ENCODE measurements at regions of chr13 and their contacts with region 1.

Region 1: DNA sequence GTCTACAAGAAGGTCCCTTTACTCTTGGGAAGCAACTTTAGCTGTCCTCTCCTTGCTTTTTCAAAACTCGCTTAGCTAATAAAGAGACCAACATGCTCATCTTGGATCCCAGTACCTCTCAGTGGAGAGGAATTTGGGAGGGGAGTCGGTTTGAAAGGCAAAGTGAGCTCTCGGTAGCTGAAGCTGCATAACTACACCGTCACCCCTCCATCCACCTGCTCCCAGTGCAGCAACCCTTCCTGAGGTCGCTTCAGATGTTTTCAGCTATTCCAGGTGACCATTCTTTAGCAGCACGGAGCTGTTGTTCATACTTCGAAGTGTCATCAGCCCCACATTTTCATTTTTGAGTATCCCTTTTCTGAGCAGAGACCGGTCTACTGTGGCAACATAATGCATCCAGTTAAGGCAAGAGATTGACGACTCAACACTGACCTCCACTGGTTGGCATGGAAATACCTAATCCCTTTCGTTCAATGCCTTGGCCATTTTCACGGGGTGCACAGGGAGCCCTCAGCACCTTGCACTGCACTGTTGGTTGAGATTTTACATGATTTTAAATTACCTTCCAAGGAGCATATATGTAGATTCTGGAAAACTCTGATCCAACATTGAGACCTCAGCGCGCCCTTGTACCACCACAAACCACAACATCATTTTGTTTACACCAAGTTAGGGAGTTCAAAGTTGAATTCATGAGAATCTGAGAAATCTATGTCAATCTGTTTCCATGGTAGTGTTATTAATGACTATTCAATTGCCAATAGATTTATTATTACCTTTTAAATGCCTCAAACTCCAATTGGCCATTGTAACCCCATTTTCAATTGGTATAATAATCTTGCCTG is 42.2 kb downstream of the DLEU7 start:
- DNase-seq: peak; percentile 61 to 68 (median 62)
- H3K4me3 ChIP-seq: no peak overlapping the region
- H3K4me3 Mint-ChIP-seq: peak overlapping the region in 1 of 8 donors; percentile 22
- H3K27ac ChIP-seq: no peak overlapping the region
- H3K27ac Mint-ChIP-seq: peak overlapping the region in 2 of 7 donors; percentile 39 to 53
- H3K4me1 ChIP-seq: peaks cover 6% of the 10 kb centered on the region
- H3K4me1 Mint-ChIP-seq: peaks cover 5 to 9% (median 6%) of the 10 kb centered on the region in 4 donors
- H3K27me3 ChIP-seq: no peaks in the 10 kb centered on the region
- H3K27me3 Mint-ChIP-seq: no peaks in the 10 kb centered on the region

Region 2: DNA sequence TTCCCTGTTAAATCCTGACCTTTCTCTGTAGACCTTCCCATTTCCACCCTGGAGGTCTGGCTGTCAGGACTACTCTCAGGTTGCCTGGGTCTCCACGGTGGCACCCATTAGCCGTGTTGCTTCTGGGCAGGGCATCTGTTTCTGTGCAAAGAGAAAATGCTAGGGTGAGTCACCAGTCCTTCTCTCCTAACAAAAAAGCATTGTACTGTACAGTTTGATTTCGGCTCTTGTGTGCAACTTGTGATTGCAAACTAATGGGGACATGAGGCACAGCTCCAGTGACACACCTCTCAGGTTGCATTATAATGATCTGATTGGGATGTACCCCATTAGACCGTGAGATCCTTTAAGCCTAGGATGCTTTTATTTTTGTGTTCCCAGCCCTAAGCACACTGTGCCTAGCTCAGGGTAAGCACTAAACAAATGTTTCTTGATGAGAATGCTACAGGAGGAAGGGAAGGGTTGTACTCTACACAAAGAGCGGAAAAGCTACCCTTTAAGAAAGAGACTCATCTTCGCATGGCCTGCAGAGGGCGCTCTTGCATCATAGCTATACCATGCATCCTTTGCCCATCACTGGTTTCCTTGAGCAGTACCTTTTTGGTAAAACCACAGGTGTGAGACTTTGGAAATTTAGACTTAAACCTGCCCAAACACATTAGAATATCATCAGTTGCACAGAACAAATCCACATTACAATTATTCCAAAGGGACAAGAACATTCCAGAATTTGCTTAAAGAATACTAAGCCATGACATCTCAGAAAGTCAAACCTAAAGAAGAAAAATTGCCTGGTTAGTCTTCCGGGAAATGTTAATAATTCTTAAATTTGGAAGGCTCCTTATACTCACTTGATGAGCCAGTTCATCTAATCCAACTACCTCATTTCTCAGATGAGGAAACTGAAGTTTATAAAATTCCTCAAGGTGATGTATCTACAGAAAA is 824.7 kb before region 1 on chr13:
- CTCF ChIA-PET with region 1: interaction called, 42 read pairs
- POLR2A ChIA-PET with region 1: no interaction called
- intact Hi-C with region 1: loop called (anchors 1 kb)
- DNase-seq: peak; percentile 68 to 75 (median 71)
- H3K4me3 ChIP-seq: no peak overlapping the region
- H3K4me3 Mint-ChIP-seq: no peak overlapping the region
- H3K27ac ChIP-seq: no peak overlapping the region
- H3K27ac Mint-ChIP-seq: no peak overlapping the region
- H3K4me1 ChIP-seq: no peaks in the 10 kb centered on the region
- H3K4me1 Mint-ChIP-seq: peaks cover 0 to 5% (median 3%) of the 10 kb centered on the region in 4 donors
- H3K27me3 ChIP-seq: no peaks in the 10 kb centered on the region
- H3K27me3 Mint-ChIP-seq: no peaks in the 10 kb centered on the region

Region 3: DNA sequence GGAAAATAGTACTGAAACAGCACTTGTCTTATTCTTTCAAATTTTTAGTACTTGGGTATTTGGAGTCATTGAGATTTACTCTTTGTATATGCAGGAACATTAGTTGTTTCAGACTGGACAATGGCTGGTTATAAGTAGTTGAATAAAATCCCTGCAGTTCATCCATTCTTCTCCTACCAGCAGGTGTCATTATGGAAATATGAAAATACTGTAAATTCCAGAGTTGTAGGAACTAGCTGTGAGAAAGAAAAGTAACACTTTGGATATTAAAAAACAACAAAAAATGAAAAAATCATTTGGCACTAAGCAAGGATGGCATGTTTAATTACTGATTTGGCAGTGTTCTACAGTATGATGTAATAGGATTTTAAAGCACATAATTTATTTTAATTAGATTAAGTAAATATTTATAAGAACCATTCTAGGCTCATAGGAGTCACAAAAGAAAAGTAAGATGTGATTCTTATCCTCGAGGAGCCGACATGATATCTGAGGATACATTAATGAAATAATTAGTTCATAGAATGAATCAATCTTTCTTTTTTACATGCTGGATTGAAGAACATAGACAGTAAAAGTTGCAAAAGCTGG is 630.8 kb before region 1 on chr13:
- CTCF ChIA-PET with region 1: interaction called, 4 read pairs
- POLR2A ChIA-PET with region 1: no interaction called
- intact Hi-C with region 1: loop called (anchors 1 kb)
- DNase-seq: no peak
- H3K4me3 ChIP-seq: no peak overlapping the region
- H3K4me3 Mint-ChIP-seq: no peak overlapping the region
- H3K27ac ChIP-seq: no peak overlapping the region
- H3K27ac Mint-ChIP-seq: no peak overlapping the region
- H3K4me1 ChIP-seq: no peaks in the 10 kb centered on the region
- H3K4me1 Mint-ChIP-seq: peaks cover 0 to 7% (median 0%) of the 10 kb centered on the region in 4 donors
- H3K27me3 ChIP-seq: no peaks in the 10 kb centered on the region
- H3K27me3 Mint-ChIP-seq: no peaks in the 10 kb centered on the region

Region 4: DNA sequence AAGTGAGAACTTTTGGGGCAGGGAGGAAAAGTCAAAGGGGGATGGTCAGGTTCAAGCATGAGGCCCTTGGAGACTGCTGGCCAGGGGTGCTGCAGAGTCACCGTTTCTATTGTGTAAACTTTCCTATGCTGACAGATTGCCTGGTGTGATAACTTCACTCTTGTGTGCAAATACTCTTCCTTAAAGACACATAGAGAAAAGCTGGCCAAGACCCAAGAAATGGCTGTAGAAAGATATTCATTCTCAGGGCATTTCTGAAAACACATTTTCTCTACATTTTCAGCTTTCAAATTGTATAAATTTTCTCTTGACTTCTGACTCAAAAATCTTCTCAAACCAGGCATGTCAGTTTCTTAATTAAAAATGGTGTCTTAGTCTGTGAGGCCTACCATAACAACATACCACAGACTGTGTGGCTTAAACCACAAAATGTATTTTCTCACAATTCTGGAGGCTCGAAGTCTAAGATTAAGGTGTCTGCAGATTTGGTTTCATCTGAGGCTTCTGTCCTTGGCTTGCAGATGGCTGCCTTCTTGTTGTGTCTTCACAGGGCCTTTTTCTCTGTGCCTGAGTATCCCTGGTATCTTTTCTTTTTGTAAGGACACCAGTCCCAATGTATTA is 481.6 kb before region 1 on chr13:
- CTCF ChIA-PET with region 1: no interaction called
- POLR2A ChIA-PET with region 1: no interaction called
- intact Hi-C with region 1: loop called (anchors 5 kb)
- DNase-seq: peak in 4 of 5 donors; percentile 11 to 20 (median 14)
- H3K4me3 ChIP-seq: no peak overlapping the region
- H3K4me3 Mint-ChIP-seq: peak overlapping the region in 6 of 8 donors; percentile 14 to 75 (median 44)
- H3K27ac ChIP-seq: no peak overlapping the region
- H3K27ac Mint-ChIP-seq: peak overlapping the region; percentile 57 to 93 (median 84)
- H3K4me1 ChIP-seq: peaks cover 32% of the 10 kb centered on the region
- H3K4me1 Mint-ChIP-seq: peaks cover 28 to 32% (median 30%) of the 10 kb centered on the region in 4 donors
- H3K27me3 ChIP-seq: no peaks in the 10 kb centered on the region
- H3K27me3 Mint-ChIP-seq: no peaks in the 10 kb centered on the region

Region 5: DNA sequence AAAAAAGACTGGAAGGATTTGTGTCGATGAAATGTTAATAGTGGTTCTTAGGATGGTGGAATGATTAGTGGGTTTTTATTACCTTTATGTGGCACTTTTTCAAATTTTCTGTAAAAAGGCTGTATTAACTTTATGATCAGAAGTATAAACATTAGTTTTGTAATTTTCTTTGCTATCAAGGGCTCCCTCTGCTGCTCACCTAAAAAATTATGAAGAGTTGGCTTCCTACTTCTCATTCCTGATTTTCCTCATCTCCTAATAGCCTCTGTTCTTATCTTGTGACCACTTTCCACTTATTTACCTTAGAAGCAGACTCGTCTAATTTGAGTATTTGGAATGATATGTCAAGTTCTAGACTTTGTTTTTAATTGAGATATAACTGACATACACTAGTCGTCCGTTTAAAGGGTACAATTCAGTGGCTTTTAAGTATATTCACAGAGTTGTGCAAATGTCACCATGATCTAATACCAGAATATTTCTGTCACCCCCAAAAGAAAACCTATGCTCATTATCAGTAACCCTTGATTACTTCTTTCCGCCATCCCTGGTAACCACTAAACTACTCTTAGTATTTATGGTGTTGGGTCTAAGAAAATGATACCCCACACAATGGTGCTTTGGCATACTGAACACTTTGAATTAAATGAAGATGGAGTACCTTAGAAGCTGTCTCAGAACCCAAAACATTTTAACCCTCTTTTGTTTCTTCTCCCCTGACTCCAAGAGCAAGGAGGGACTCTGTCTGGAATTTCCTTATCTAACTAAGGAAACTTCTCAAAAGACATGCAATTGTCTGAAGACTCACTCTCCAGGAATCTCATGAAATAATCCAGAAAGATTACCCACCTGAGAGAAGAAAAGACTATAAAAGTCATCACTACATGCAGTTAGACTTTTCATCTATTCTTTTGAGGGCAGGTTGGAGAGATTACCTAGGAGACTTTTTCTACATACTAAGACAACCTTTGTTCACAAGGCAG is 269.1 kb before region 1 on chr13:
- CTCF ChIA-PET with region 1: interaction called, 3 read pairs
- POLR2A ChIA-PET with region 1: no interaction called
- intact Hi-C with region 1: loop called (anchors 5 kb)
- DNase-seq: peak in 2 of 5 donors; percentile 14 to 18
- H3K4me3 ChIP-seq: no peak overlapping the region
- H3K4me3 Mint-ChIP-seq: no peak overlapping the region
- H3K27ac ChIP-seq: no peak overlapping the region
- H3K27ac Mint-ChIP-seq: no peak overlapping the region
- H3K4me1 ChIP-seq: peaks cover 18% of the 10 kb centered on the region
- H3K4me1 Mint-ChIP-seq: peaks cover 11 to 26% (median 22%) of the 10 kb centered on the region in 4 donors
- H3K27me3 ChIP-seq: no peaks in the 10 kb centered on the region
- H3K27me3 Mint-ChIP-seq: no peaks in the 10 kb centered on the region

Region 6: GRCh38 chr13:51070005-51070649 is 268.8 kb after region 1 on chr13:
- CTCF ChIA-PET with region 1: no interaction called
- POLR2A ChIA-PET with region 1: no interaction called
- intact Hi-C with region 1: loop called (anchors 1 kb)
- DNase-seq: peak; percentile 61 to 69 (median 64)
- H3K4me3 ChIP-seq: no peak overlapping the region
- H3K4me3 Mint-ChIP-seq: no peak overlapping the region
- H3K27ac ChIP-seq: no peak overlapping the region
- H3K27ac Mint-ChIP-seq: peak overlapping the region in 3 of 7 donors; percentile 9 to 24 (median 11)
- H3K4me1 ChIP-seq: peaks cover 7% of the 10 kb centered on the region
- H3K4me1 Mint-ChIP-seq: peaks cover 5 to 8% (median 7%) of the 10 kb centered on the region in 4 donors
- H3K27me3 ChIP-seq: no peaks in the 10 kb centered on the region
- H3K27me3 Mint-ChIP-seq: peaks cover 11 to 13% of the 10 kb centered on the region in 2 donors